CD4-positive, alpha-beta T cell (primary cell): ENCODE measurements at regions of chr1 and their contacts with region 1.

Region 1: GRCh38 chr1:220123889-220124288 is 30.0 kb downstream of the IARS2 start:
- DNase-seq: peak in 4 of 14 experiments; percentile 7 to 17 (median 10)
- ATAC-seq: no peak
- H3K4me3 ChIP-seq: no peak overlapping the region
- H3K4me3 Mint-ChIP-seq: no peak overlapping the region
- H3K27ac ChIP-seq: no peak overlapping the region
- H3K27ac Mint-ChIP-seq: peak overlapping the region; percentile 34
- H3K4me1 ChIP-seq: no peaks in the 10 kb centered on the region
- H3K4me1 Mint-ChIP-seq: peaks cover 10% of the 10 kb centered on the region
- H3K27me3 ChIP-seq: no peaks in the 10 kb centered on the region
- H3K27me3 Mint-ChIP-seq: no peaks in the 10 kb centered on the region
- CTCF ChIP-seq: peak; percentile 37

Region 2: DNA sequence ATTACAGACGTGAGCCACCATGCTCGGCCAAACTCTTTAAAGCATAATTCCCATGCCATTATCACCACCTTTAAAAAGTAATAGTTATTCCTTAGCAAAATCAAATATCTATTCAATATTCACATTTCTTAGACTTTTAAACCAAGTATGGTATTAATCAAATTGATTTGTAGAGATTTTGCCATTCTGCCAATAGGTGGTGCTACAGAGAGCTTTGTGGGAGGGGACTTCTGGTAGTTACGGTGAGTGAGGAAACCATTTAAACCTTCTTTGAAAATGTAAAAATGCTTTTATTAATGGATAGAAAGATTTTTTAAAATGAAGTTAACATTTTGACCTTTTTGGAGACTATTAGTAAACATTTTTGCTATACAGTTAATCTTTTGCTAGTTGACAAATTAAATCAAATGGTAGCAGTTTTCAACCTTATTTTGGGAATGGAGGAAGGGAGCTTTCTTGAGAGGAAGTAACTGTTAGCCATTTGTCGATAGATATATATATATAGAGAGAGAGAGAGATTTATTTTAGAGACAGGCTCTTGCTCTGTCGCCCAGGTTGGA is 10.7 kb before region 1 on chr1:
- CTCF ChIA-PET with region 1: interaction called, 13 read pairs
- POLR2A ChIA-PET with region 1: no interaction called
- intact Hi-C with region 1: no loop called
- DNase-seq: peak in 5 of 14 experiments; percentile 9 to 72 (median 62)
- ATAC-seq: peak; percentile 78
- H3K4me3 ChIP-seq: no peak overlapping the region
- H3K4me3 Mint-ChIP-seq: no peak overlapping the region
- H3K27ac ChIP-seq: no peak overlapping the region
- H3K27ac Mint-ChIP-seq: no peak overlapping the region
- H3K4me1 ChIP-seq: no peaks in the 10 kb centered on the region
- H3K4me1 Mint-ChIP-seq: peaks cover 9% of the 10 kb centered on the region
- H3K27me3 ChIP-seq: no peaks in the 10 kb centered on the region
- H3K27me3 Mint-ChIP-seq: no peaks in the 10 kb centered on the region
- CTCF ChIP-seq: peak; percentile 69

Region 3: DNA sequence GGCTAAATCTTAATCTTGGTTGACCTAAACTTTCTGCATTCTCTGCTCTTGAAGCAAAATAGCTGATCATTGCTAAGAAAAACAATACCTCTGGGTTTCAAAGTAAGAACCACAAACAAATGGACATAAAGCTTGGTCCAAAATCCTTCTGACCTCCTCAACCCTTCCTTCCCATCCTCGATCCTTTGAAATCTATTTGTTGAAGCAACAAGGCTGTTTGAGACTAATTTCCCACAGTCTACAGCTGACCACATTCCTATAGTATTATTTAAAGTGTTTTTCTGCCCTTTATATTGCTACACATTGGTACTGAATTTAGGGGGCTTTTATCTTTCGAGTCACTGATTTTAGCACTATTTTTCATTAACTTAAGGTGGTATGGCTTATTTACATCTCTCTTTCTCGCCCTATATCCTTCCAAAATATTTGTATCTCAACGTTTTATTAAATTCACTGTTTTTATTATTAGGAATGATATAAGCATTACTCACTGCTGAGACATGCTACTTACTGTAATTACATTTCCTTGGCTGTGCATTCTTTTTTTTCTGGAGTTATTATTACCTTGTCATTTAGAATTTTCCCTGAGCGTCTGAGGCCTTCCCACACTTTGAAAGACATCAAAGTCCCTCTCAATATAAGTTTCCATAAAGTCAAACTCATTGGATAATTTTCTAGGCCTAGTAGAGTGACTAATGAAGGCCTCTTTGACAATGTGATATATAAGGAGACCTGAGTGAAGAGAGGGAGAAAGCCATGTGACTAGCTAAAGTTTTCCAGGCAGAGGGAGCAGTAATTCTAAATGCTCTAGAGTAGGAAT is 74.5 kb after region 1 on chr1:
- CTCF ChIA-PET with region 1: no interaction called
- POLR2A ChIA-PET with region 1: no interaction called
- intact Hi-C with region 1: no loop called
- DNase-seq: no peak
- ATAC-seq: no peak
- H3K4me3 ChIP-seq: no peak overlapping the region
- H3K4me3 Mint-ChIP-seq: no peak overlapping the region
- H3K27ac ChIP-seq: no peak overlapping the region
- H3K27ac Mint-ChIP-seq: no peak overlapping the region
- H3K4me1 ChIP-seq: no peaks in the 10 kb centered on the region
- H3K4me1 Mint-ChIP-seq: no peaks in the 10 kb centered on the region
- H3K27me3 ChIP-seq: no peaks in the 10 kb centered on the region
- H3K27me3 Mint-ChIP-seq: no peaks in the 10 kb centered on the region
- CTCF ChIP-seq: no peak